Naive thymus-derived CD8-positive, alpha-beta T cell (primary cell): ENCODE measurements at regions of chr19 and their contacts with region 1.

Region 1: GRCh38 chr19:10095948-10096621 is 6.4 kb downstream of the ANGPTL6 start:
- DNase-seq: peak; percentile 84 to 96 (median 90)
- ATAC-seq: peak; percentile 89 to 90
- H3K4me3 Mint-ChIP-seq: peak overlapping the region; percentile 54 to 74 (median 69)
- H3K27ac Mint-ChIP-seq: peak overlapping the region in 9 of 10 donors; percentile 49 to 87 (median 79)
- H3K4me1 Mint-ChIP-seq: peaks cover 22 to 40% (median 35%) of the 10 kb centered on the region in 4 donors
- H3K27me3 Mint-ChIP-seq: no peaks in the 10 kb centered on the region

Region 2: GRCh38 chr19:10043286-10043927 is 52.7 kb before region 1 on chr19:
- POLR2A ChIA-PET with region 1: no interaction called
- DNase-seq: peak in 3 of 10 donors; percentile 1 to 30 (median 25)
- ATAC-seq: no peak
- H3K4me3 Mint-ChIP-seq: no peak overlapping the region
- H3K27ac Mint-ChIP-seq: no peak overlapping the region
- H3K4me1 Mint-ChIP-seq: no peaks in the 10 kb centered on the region
- H3K27me3 Mint-ChIP-seq: peaks cover 18 to 66% (median 31%) of the 10 kb centered on the region in 5 donors

Region 3: DNA sequence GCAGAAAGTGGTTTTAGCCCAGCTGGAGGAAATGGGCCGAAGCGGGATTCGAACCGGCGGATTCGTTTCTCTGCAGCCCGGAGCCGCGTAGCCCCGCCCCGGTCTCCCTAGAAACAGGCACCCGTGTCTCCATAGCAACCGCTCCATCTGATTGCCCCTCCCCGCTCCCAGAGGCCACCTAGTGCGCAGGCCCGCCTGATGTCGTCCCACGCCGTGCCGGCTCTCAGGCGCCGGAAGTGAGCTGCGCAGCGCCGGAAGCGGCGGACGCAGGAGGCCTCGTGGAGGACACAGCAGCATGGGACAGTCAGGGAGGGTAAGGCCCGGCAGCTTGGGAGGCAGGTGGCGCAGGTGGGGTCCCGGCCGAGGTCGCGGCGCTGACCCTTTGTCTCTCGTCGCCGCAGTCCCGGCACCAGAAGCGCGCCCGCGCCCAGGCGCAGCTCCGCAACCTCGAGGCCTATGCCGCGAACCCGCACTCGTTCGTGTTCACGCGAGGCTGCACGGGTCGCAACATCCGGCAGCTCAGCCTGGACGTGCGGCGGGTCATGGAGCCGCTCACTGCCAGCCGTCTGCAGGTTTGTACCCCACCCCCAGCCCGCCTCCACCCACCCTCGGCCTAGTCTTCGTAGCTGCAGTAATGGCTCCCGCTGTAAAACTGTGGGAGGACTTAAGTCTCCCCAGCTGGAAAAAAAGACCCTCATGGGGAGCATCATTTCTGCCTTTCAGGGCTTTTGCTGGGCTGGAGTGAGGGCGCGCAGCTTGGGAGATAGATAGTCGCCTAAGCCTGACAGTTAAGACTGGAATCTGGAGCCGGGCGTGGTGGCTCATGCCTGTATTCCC is 10.2 kb after region 1 on chr19 and contains the start of gene PPAN:
- POLR2A ChIA-PET with region 1: interaction called, 103 read pairs
- DNase-seq: peak; percentile 91 to 99 (median 97)
- ATAC-seq: peak; percentile 64 to 66
- H3K4me3 Mint-ChIP-seq: peak within 1 kb of the TSS; percentile 75 to 93 (median 86)
- H3K27ac Mint-ChIP-seq: peak within 1 kb of the TSS; percentile 95 to 100 (median 98)
- H3K4me1 Mint-ChIP-seq: peaks cover 23 to 69% (median 61%) of the 10 kb centered on the region in 4 donors
- H3K27me3 Mint-ChIP-seq: no peaks in the 10 kb centered on the region
- polyA plus RNA-seq, gene PPAN: 15.7 to 42.7 (median 25.8) TPM

Region 4: DNA sequence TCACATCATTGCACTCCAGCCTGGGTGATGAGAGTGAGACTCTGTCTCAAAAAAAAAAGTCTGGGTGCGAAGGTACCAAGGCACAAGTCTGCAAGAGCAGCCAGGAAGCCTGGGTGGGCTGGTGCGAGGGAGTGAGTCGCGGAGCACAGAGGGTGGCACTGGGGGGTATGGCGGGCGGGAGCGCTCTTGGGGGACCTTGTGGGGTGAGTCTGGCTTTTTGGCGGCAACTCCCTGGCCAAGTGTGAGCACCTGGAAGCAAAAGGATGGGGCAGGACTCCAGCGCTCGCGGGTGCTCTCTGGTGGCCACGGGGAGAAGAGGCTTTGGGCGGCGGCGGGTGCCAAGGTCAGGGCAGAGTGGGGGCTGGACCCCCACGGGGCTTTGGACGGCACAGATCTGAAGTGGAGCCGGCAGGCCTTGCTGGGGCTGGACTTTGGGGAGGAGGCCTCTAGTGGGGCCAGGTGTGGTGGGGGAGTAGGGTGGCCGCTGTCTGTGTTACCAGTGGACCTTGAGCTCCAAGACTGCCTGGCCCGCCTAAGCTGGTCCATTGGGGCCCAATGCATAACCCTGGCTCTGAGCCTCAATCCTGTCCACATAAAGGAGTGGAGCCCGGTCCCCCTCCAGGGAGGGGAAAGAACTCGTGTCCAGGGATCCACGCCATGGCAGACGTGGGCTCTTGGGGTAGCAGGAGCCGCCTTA is 17.0 kb after region 1 on chr19:
- POLR2A ChIA-PET with region 1: interaction called, 103 read pairs
- DNase-seq: peak in 9 of 10 donors; percentile 38 to 78 (median 57)
- ATAC-seq: peak; percentile 60 to 61
- H3K4me3 Mint-ChIP-seq: peak overlapping the region; percentile 41 to 87 (median 62)
- H3K27ac Mint-ChIP-seq: peak overlapping the region; percentile 75 to 97 (median 89)
- H3K4me1 Mint-ChIP-seq: peaks cover 19 to 58% (median 45%) of the 10 kb centered on the region in 4 donors
- H3K27me3 Mint-ChIP-seq: no peaks in the 10 kb centered on the region